ENCODE measurements at regions of chr11 and their contacts with region 1.

Region 1: GRCh38 chr11:117807482-117808327 is 10.7 kb upstream of the DSCAML1 start:
- DNase-seq: peak; percentile 58 to 70 (median 62)
- H3K4me3 ChIP-seq: no peak overlapping the region
- H3K4me3 Mint-ChIP-seq: no peak overlapping the region
- H3K27ac ChIP-seq: no peak overlapping the region
- H3K27ac Mint-ChIP-seq: peak overlapping the region in 1 of 7 donors; percentile 45
- H3K4me1 ChIP-seq: peaks cover 10% of the 10 kb centered on the region
- H3K4me1 Mint-ChIP-seq: peaks cover 7 to 17% (median 10%) of the 10 kb centered on the region in 4 donors
- H3K27me3 ChIP-seq: no peaks in the 10 kb centered on the region
- H3K27me3 Mint-ChIP-seq: peaks cover 0 to 3% of the 10 kb centered on the region in 2 donors

Region 2: DNA sequence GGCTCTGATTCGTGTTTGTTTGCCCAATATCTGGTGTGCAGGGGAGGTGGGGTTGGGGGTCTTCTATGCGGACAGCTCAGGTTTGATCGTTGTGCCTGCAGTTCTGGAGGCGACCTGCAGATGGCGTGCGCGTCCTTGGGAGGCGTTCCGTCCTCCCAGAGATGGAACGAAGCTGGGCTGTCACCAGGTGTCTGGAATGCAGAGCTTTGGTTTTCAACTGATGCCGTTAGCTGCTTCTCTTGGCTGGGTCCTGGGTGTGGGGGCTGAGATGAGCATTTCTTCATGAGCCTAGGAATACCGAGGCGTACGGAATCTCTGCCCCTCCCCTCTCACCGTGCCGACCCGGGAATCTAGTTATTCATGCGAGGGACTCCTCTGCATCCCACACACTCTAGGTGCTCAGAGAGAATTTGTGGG is 381.4 kb before region 1 on chr11:
- CTCF ChIA-PET with region 1: interaction called, 21 read pairs
- POLR2A ChIA-PET with region 1: no interaction called
- intact Hi-C with region 1: no loop called
- DNase-seq: peak in 4 of 5 donors; percentile 42 to 59 (median 52)
- H3K4me3 ChIP-seq: no peak overlapping the region
- H3K4me3 Mint-ChIP-seq: peak overlapping the region in 4 of 8 donors; percentile 6 to 60 (median 36)
- H3K27ac ChIP-seq: no peak overlapping the region
- H3K27ac Mint-ChIP-seq: no peak overlapping the region
- H3K4me1 ChIP-seq: peaks cover 6% of the 10 kb centered on the region
- H3K4me1 Mint-ChIP-seq: peaks cover 0 to 13% (median under 1%) of the 10 kb centered on the region in 4 donors
- H3K27me3 ChIP-seq: no peaks in the 10 kb centered on the region
- H3K27me3 Mint-ChIP-seq: peaks cover 0 to 1% of the 10 kb centered on the region in 2 donors

Region 3: DNA sequence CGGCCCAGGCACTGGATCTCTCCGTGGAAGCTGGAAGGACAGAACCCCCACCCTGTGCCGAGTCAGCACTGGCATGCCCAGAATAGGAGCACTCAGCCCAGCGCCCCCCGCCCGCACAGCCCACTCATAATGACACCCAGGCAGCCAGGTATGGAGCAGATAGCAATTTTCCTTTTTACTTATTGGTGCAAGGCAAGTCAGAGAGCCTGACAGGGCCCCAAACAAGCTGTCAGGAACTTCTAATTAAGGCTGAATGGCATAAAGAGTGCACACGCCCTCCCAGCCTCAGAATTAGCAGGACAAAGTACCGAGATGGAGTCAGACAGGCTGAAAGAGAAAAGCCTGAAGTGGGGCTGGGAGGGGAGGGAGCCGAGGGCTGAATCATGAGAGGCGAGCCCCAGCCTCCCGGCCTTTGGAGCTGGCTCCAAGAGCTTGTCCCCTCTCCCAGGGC is 87.6 kb before region 1 on chr11:
- CTCF ChIA-PET with region 1: no interaction called
- POLR2A ChIA-PET with region 1: no interaction called
- intact Hi-C with region 1: no loop called
- DNase-seq: no peak
- H3K4me3 ChIP-seq: no peak overlapping the region
- H3K4me3 Mint-ChIP-seq: no peak overlapping the region
- H3K27ac ChIP-seq: no peak overlapping the region
- H3K27ac Mint-ChIP-seq: no peak overlapping the region
- H3K4me1 ChIP-seq: no peaks in the 10 kb centered on the region
- H3K4me1 Mint-ChIP-seq: no peaks in the 10 kb centered on the region
- H3K27me3 ChIP-seq: no peaks in the 10 kb centered on the region
- H3K27me3 Mint-ChIP-seq: peaks cover 4 to 11% of the 10 kb centered on the region in 2 donors

Region 4: DNA sequence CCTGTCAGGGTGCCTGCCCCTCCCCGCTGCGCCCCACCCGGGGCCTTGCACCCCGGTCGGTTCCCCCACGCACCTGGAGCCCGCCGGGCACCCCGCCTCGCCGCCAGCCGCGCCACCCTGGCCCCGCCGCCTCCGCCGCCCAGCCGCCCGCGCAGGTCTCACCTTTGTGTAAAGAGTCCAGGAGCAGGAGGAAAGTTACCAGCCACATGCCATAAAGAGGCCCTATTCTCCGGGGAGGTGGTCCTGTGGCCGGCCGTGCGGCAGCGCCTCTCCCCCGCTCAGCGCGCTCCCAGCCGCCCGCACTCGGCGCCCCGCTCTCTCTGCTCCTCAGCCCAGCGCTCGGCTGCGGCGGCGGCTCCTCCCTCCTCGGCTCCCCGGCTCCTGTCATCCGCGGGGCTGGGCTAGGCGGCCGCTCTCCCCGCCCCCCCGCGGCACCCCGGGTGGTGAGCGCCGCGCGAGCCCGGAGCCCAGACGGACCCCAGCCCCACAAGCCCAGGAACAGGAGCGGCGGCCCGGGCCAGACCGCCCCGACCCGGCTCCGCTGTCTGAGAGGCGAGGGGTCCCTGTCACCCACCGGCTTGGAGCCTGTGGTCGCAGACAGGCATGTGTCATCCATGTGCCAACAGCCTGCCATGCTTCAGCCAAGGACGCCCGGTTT is 10.7 kb before region 1 on chr11 and contains the start of gene DSCAML1:
- CTCF ChIA-PET with region 1: interaction called, 10 read pairs
- POLR2A ChIA-PET with region 1: no interaction called
- intact Hi-C with region 1: no loop called
- DNase-seq: peak in 4 of 5 donors; percentile 34 to 42 (median 36)
- H3K4me3 ChIP-seq: peak within 1 kb of the TSS in 1 of 2 donors; percentile 28
- H3K4me3 Mint-ChIP-seq: peak within 1 kb of the TSS; percentile 42 to 86 (median 72)
- H3K27ac ChIP-seq: no peak within 1 kb of the TSS
- H3K27ac Mint-ChIP-seq: peak within 1 kb of the TSS in 2 of 7 donors; percentile 30 to 54
- H3K4me1 ChIP-seq: peaks cover 18% of the 10 kb centered on the region
- H3K4me1 Mint-ChIP-seq: peaks cover 2 to 22% (median 12%) of the 10 kb centered on the region in 4 donors
- H3K27me3 ChIP-seq: peaks cover 38% of the 10 kb centered on the region
- H3K27me3 Mint-ChIP-seq: peaks cover 41 to 45% of the 10 kb centered on the region in 2 donors
- total RNA-seq, gene DSCAML1: 1.00 to 1.0 TPM

Region 5: GRCh38 chr11:117828611-117829368 is 21.1 kb after region 1 on chr11:
- CTCF ChIA-PET with region 1: interaction called, 440 read pairs
- POLR2A ChIA-PET with region 1: interaction called, 3 read pairs
- intact Hi-C with region 1: no loop called
- DNase-seq: peak; percentile 49 to 91 (median 59)
- H3K4me3 ChIP-seq: no peak overlapping the region
- H3K4me3 Mint-ChIP-seq: peak overlapping the region in 4 of 8 donors; percentile 24 to 65 (median 44)
- H3K27ac ChIP-seq: peak overlapping the region; percentile 44
- H3K27ac Mint-ChIP-seq: peak overlapping the region; percentile 65 to 87 (median 79)
- H3K4me1 ChIP-seq: peaks cover 40% of the 10 kb centered on the region
- H3K4me1 Mint-ChIP-seq: peaks cover 19 to 69% (median 40%) of the 10 kb centered on the region in 4 donors
- H3K27me3 ChIP-seq: no peaks in the 10 kb centered on the region
- H3K27me3 Mint-ChIP-seq: no peaks in the 10 kb centered on the region

Region 6: DNA sequence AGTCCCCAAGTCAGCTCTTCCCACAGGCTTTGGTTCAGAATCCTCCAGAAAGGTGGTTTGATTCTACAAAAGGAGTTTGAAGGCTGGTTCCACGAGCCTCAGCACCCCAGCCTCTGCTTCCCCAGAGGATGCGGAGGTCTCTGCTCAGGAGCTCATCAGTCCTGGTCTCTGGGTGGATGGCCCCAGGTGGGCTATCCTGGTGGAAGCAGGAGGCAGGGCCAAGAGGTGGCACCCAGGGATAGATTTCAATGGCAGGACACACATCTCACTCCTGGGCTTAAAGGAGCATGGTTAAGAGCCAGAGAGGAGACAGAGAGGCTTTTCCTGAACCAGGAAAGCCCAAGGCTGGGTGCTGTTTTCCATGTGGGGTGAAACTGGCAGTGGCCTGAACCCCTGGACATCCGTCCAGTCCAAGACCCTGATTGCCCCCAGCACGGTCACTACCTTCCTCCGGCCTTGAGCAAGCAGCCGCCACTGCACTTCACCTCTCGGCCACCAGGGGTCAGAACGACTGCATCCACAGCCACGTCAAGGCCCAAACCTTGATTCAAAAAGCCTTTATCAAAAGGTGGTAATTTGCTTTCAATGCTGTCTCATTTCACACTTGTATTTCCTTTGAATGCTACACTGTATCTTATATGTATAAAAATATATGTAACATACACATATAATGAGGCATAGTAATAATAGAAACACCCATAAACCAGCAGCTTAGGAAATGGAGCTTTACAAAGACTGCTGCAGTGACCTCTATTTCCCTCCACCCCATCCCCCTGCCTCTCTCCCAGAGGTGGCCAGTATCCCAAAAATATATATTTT is 36.2 kb after region 1 on chr11:
- CTCF ChIA-PET with region 1: interaction called, 34 read pairs
- POLR2A ChIA-PET with region 1: no interaction called
- intact Hi-C with region 1: no loop called
- DNase-seq: peak; percentile 72 to 79 (median 76)
- H3K4me3 ChIP-seq: no peak overlapping the region
- H3K4me3 Mint-ChIP-seq: no peak overlapping the region
- H3K27ac ChIP-seq: no peak overlapping the region
- H3K27ac Mint-ChIP-seq: peak overlapping the region in 2 of 7 donors; percentile 56 to 79
- H3K4me1 ChIP-seq: peaks cover 4% of the 10 kb centered on the region
- H3K4me1 Mint-ChIP-seq: peaks cover 0 to 8% (median 2%) of the 10 kb centered on the region in 4 donors
- H3K27me3 ChIP-seq: no peaks in the 10 kb centered on the region
- H3K27me3 Mint-ChIP-seq: no peaks in the 10 kb centered on the region

Region 7: DNA sequence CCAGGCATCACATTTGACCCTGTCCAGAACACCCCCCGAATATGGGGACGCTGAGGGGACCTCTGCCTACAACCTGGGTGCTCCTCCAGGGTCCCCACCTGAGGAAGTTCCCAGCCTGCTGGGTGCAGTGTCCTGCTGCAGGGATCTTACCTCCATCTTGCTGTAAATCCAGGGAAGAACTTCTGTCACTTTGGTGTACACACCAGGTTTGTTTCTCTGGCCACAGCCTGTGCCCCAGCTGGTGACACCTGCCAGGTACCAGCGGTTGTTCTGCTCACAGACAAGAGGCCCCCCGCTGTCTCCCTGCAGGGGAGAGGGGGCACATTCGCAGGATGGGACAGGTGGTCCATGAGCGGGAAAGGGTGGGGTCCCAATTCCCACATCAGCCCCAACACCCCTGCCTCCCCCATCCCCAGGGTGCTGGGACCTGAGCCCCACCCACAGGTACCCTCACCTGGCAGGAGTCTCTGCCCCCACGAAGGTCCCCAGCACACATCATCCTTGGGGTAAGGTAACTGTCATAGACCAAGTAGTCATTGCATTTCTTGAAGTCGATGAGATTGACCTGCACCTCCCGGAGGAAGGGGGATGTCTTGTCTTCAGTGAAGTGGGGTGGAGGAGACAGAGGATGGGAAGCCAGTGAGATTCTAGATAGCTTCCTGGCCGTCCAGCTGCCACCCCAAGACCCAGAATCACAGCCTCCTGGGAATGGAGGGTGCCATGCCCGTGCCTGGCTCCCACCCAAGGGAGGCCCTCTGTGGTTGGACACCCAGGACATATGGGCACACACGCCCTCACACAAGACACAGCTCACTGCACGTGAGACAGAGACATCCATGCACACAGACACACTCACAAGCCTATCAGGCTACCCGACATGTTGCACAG is 96.0 kb after region 1 on chr11:
- CTCF ChIA-PET with region 1: interaction called, 10 read pairs
- POLR2A ChIA-PET with region 1: no interaction called
- intact Hi-C with region 1: no loop called
- DNase-seq: no peak
- H3K4me3 ChIP-seq: no peak overlapping the region
- H3K4me3 Mint-ChIP-seq: no peak overlapping the region
- H3K27ac ChIP-seq: no peak overlapping the region
- H3K27ac Mint-ChIP-seq: no peak overlapping the region
- H3K4me1 ChIP-seq: peaks cover 6% of the 10 kb centered on the region
- H3K4me1 Mint-ChIP-seq: peaks cover 0 to 12% (median 8%) of the 10 kb centered on the region in 4 donors
- H3K27me3 ChIP-seq: no peaks in the 10 kb centered on the region
- H3K27me3 Mint-ChIP-seq: no peaks in the 10 kb centered on the region

Region 8: GRCh38 chr11:117985953-117986887 is 178.5 kb after region 1 on chr11 and contains the start of gene IL10RA:
- CTCF ChIA-PET with region 1: interaction called, 21 read pairs
- POLR2A ChIA-PET with region 1: interaction called, 3 read pairs
- intact Hi-C with region 1: no loop called
- DNase-seq: peak; percentile 82 to 85 (median 84)
- H3K4me3 ChIP-seq: peak within 1 kb of the TSS; percentile 97 to 99
- H3K4me3 Mint-ChIP-seq: peak within 1 kb of the TSS; percentile 91 to 100 (median 94)
- H3K27ac ChIP-seq: peak within 1 kb of the TSS; percentile 98
- H3K27ac Mint-ChIP-seq: peak within 1 kb of the TSS; percentile 89 to 98 (median 96)
- H3K4me1 ChIP-seq: peaks cover 60% of the 10 kb centered on the region
- H3K4me1 Mint-ChIP-seq: peaks cover 41 to 86% (median 57%) of the 10 kb centered on the region in 4 donors
- H3K27me3 ChIP-seq: no peaks in the 10 kb centered on the region
- H3K27me3 Mint-ChIP-seq: no peaks in the 10 kb centered on the region
- total RNA-seq, gene IL10RA: 398 to 406 TPM

Measured in CD4-positive, alpha-beta memory T cell (primary cell).